Activated CD4-positive, alpha-beta memory T cell treated with anti-CD3 and anti-CD28 coated beads for 36 hours (primary cell): ENCODE measurements at regions of chr16 and their contacts with region 1.

Region 1: GRCh38 chr16:56317998-56318826 is 107.1 kb downstream of the AMFR start:
- DNase-seq: peak; percentile 87
- H3K4me3 Mint-ChIP-seq: no peak overlapping the region
- H3K27ac Mint-ChIP-seq: no peak overlapping the region
- H3K4me1 Mint-ChIP-seq: peaks cover 3% of the 10 kb centered on the region
- H3K27me3 Mint-ChIP-seq: no peaks in the 10 kb centered on the region

Region 2: DNA sequence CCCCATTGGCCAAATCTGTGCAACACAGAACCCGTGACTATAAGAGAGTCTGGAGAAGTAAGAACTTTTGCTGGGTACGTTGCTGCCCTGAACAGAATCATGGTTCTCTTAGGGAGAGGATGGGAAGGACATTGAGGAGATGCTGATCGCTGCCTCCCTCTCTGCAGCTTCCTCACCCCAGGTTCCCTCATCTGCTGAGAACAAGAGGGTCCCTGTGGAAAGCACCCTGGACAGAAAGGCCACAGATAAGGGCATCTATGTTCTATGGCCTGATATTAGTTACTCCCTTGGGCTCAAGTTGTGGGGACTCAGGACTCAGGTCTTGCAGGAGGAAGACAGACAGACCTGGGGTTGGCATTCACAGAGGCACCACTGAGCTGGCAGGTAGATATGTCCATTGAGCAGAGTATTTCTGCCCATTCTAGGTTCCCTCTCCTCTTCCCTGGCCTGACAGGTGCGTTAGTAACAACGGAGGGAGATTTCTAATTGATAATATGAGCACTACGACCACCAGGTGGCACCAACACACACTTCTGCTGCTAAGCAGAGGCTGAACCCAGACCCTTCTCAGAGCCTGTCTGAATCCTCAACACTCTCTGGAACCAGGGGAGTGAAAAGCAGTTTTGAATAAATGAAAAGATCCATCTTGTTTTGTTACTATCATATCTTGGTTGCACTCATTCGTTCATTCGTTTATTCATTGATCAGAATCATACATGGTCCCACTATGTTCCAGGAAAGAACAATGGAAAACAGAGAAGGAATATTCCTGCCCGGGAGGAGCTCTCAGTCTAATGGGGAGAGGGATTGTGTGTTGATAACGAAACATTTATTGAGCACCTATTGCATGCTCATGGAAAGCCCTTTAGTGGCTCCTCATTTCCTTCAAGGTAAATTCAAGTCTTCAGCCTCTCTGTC is 606.0 kb before region 1 on chr16:
- CTCF ChIA-PET with region 1: no interaction called
- POLR2A ChIA-PET with region 1: no interaction called
- intact Hi-C with region 1: loop called (anchors 1 kb)
- DNase-seq: peak; percentile 65
- H3K4me3 Mint-ChIP-seq: no peak overlapping the region
- H3K27ac Mint-ChIP-seq: no peak overlapping the region
- H3K4me1 Mint-ChIP-seq: no peaks in the 10 kb centered on the region
- H3K27me3 Mint-ChIP-seq: peaks cover 15% of the 10 kb centered on the region

Region 3: GRCh38 chr16:55944377-55944802 is 373.8 kb before region 1 on chr16:
- CTCF ChIA-PET with region 1: interaction called, 123 read pairs
- POLR2A ChIA-PET with region 1: no interaction called
- intact Hi-C with region 1: loop called (anchors 1 kb)
- DNase-seq: peak; percentile 62
- H3K4me3 Mint-ChIP-seq: no peak overlapping the region
- H3K27ac Mint-ChIP-seq: no peak overlapping the region
- H3K4me1 Mint-ChIP-seq: no peaks in the 10 kb centered on the region
- H3K27me3 Mint-ChIP-seq: peaks cover 43% of the 10 kb centered on the region

Region 4: DNA sequence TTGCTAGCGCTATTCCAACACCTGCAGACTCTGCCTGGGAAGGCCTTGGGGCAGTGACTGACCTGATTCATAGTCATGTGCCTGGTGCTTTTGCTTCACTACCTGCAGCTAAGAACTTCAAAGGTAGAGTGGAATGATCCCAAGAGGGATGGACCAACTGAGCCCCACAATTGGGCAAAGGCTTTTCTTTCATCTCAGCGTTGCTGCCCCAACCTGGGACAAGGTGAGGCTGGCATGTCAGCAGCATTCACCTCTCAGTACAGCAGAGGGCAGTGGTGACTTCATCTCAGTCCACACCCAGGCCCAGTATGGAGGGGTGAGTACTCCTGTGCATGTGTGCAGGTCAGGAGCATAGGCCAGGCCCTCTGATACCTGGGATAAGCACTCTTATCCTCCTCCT is 276.5 kb before region 1 on chr16:
- CTCF ChIA-PET with region 1: interaction called, 38 read pairs
- POLR2A ChIA-PET with region 1: no interaction called
- intact Hi-C with region 1: loop called (anchors 1 kb)
- DNase-seq: peak; percentile 41
- H3K4me3 Mint-ChIP-seq: no peak overlapping the region
- H3K27ac Mint-ChIP-seq: no peak overlapping the region
- H3K4me1 Mint-ChIP-seq: no peaks in the 10 kb centered on the region
- H3K27me3 Mint-ChIP-seq: peaks cover 1% of the 10 kb centered on the region

Region 5: DNA sequence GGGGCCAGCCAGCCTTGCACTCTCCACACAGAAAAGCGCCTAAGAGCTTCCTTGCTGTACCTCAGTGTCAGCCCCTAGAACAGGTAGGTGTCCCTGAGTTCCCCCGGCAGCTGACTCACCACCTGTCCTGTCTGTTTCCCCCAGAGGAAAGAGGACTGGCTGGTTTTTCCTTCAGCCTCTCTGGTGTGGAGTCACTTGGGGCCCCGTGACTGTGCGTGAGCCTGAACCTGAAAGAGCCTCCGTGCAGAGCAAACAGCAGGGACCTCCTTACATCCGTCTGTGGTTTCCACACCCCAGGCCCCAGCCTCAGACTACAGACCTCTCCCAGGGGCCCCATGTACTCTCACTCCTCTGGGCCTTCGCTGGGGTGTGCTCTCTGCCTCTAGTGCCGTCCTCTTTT is 39.1 kb before region 1 on chr16:
- CTCF ChIA-PET with region 1: interaction called, 5 read pairs
- POLR2A ChIA-PET with region 1: no interaction called
- intact Hi-C with region 1: loop called (anchors 1 kb)
- DNase-seq: peak; percentile 80
- H3K4me3 Mint-ChIP-seq: no peak overlapping the region
- H3K27ac Mint-ChIP-seq: peak overlapping the region; percentile 4
- H3K4me1 Mint-ChIP-seq: peaks cover 25% of the 10 kb centered on the region
- H3K27me3 Mint-ChIP-seq: no peaks in the 10 kb centered on the region

Region 6: DNA sequence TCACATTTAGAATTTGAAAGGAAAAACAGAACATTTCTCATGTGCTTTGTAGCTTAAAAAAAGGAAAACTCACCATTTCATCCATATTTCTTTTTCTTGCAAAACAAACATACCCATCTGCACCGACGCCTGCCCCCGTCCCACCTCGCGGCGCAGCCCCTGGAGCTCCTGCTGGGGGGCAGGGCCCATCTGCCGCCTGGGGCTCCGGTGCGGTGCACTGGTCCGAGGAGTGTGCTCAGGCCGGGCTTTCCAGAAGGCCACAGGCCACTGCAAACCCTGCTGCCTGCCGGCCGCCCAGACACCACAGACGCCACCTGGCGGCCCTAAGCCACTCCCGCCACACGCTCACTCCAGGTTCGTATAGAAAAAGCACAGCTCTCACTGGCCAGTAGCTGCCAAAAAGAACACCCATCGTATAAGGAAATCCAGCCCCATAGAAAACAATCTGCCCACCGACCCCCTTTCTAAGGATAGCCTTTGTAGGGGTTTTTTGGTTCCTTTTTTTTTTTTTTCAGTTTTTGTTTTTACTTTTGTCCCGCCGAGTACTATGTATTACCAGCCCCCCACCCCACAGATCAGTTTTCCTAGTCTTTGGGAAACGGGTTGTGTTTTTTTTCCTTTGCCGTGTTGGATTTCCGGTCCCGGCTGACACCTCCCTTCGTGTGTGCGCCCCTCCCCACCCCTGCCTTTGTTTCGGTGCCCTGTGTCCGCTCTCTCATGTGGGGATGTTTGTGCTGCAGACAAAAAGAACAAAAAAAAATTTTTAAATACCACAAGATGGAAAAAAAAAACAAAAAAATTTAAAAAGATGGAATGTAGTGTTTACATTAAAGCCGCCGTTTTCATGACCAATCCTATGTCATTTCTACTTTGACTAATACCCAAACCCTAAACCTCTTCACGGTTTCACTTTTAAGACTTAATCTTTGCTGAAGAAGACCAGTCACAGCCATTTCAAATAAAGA is 38.3 kb after region 1 on chr16:
- CTCF ChIA-PET with region 1: interaction called, 11 read pairs
- POLR2A ChIA-PET with region 1: no interaction called
- intact Hi-C with region 1: no loop called
- DNase-seq: peak; percentile 74
- H3K4me3 Mint-ChIP-seq: peak overlapping the region; percentile 73
- H3K27ac Mint-ChIP-seq: peak overlapping the region; percentile 89
- H3K4me1 Mint-ChIP-seq: peaks cover 23% of the 10 kb centered on the region
- H3K27me3 Mint-ChIP-seq: no peaks in the 10 kb centered on the region

Region 7: GRCh38 chr16:56475201-56475600 is 157.0 kb after region 1 on chr16:
- CTCF ChIA-PET with region 1: no interaction called
- POLR2A ChIA-PET with region 1: no interaction called
- intact Hi-C with region 1: no loop called
- DNase-seq: no peak
- H3K4me3 Mint-ChIP-seq: no peak overlapping the region
- H3K27ac Mint-ChIP-seq: no peak overlapping the region
- H3K4me1 Mint-ChIP-seq: peaks cover 19% of the 10 kb centered on the region
- H3K27me3 Mint-ChIP-seq: no peaks in the 10 kb centered on the region

Region 8: DNA sequence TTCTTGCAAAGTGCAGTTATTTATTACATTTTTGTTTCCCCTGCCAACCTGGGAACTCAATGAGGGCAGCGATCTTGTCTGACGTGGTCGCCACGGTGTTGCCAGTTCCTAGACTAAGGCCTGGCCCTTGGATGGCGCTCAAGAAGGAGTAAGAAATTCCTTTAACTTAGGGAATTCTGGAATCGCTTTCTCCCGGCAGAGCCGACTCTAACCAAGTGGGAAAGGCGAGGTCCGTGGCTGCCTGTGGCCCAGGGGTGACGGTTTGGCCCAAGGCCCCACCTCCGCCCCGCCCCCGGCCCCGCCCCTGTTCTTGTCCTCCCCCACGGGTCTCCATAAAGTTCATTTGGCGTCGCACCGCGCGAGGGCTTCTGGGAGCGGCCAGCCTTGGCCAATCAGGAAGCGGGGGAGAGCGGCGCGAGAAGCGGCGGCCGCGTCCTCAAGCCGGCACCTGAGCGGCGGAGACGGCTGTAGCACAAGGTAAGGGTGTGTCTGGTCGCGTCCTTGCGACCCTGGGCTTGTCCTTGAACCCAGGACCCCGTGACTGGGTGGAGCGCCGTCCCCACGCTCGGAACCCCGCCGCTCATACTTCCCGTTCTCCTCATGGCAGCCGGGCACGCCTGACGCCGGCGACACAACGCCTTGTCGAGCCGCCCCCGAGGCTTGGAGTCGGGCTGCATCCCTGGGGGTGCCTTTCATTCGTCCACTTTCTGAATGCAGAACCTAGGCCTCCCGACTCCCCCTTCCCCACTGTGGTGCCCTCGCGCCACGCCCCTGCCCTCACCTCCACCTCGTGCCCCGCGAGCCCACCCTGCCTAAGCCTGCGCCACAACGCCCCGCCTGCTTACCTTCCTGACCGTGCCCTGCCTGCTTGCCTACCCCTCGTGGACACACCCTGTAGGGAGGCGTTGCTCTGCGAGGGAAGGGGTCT is 411.8 kb after region 1 on chr16 and contains the start of gene NUP93:
- CTCF ChIA-PET with region 1: no interaction called
- POLR2A ChIA-PET with region 1: no interaction called
- intact Hi-C with region 1: no loop called
- DNase-seq: peak; percentile 94
- H3K4me3 Mint-ChIP-seq: peak within 1 kb of the TSS; percentile 88
- H3K27ac Mint-ChIP-seq: peak within 1 kb of the TSS; percentile 51
- H3K4me1 Mint-ChIP-seq: peaks cover 16% of the 10 kb centered on the region
- H3K27me3 Mint-ChIP-seq: no peaks in the 10 kb centered on the region
- total RNA-seq, gene NUP93: 131 to 133 TPM